ENCODE measurements at regions of chr12 and their contacts with region 1.

Region 1: DNA sequence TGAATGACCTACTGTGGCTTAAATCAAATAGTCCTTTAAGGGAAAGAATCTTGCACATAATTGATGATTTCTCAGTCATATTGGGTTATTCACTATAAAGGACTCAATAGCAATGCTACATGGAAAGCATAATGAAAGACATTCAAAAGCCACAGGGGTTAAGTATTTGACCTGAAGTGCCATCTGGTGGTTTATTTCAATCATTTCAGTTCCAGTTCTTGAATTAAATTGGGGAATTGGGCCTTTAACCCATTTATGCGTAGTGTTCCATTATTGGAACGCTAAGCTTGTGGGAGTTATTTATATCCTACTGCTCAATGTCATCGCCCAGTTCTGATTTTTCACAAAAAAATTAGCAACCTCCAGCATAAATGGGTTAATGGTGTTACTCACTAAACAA is 41.3 kb upstream of the C12orf71 start:
- DNase-seq: peak in 2 of 5 donors; percentile 10
- H3K4me3 ChIP-seq: no peak overlapping the region
- H3K4me3 Mint-ChIP-seq: no peak overlapping the region
- H3K27ac ChIP-seq: no peak overlapping the region
- H3K27ac Mint-ChIP-seq: no peak overlapping the region
- H3K4me1 ChIP-seq: no peaks in the 10 kb centered on the region
- H3K4me1 Mint-ChIP-seq: no peaks in the 10 kb centered on the region
- H3K27me3 ChIP-seq: no peaks in the 10 kb centered on the region
- H3K27me3 Mint-ChIP-seq: no peaks in the 10 kb centered on the region

Region 2: DNA sequence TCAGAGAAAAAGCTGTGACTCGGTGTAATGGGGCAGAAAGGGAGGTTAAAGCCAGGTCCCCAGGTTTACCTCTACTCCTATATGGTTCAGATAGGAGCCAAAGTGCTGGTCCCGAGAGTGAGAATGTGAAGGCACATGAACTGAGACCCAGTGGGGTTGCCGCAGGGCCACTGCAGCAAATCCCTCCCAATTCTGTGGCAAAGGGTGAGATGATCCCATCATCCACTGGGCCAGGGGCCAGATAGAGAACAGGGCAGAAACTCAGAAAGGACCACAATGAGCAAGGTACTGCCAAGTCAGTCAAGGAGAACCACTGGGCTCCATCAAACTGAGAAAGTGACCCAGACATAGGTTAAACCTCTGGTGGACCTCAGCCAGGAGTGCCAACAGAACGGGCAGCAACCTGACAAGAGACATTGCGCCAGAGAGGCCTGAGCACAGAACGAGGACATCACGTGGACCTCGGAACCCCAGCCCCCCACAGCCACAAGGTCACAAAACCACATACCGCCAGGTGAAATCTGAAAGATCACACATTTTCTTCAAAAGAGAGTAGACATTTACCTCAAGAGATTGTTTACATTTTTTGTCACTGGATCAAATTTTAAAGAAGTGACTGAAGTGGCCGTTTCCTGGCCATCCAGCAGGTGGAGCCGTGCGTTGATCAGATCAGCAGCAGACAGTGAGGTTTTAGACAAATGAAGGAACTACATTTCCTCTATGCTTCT is 270.2 kb before region 1 on chr12:
- CTCF ChIA-PET with region 1: no interaction called
- POLR2A ChIA-PET with region 1: no interaction called
- intact Hi-C with region 1: loop called (anchors 5 kb)
- DNase-seq: peak; percentile 59 to 69 (median 67)
- H3K4me3 ChIP-seq: no peak overlapping the region
- H3K4me3 Mint-ChIP-seq: no peak overlapping the region
- H3K27ac ChIP-seq: no peak overlapping the region
- H3K27ac Mint-ChIP-seq: peak overlapping the region in 2 of 7 donors; percentile 10 to 14
- H3K4me1 ChIP-seq: peaks cover 4% of the 10 kb centered on the region
- H3K4me1 Mint-ChIP-seq: no peaks in the 10 kb centered on the region
- H3K27me3 ChIP-seq: no peaks in the 10 kb centered on the region
- H3K27me3 Mint-ChIP-seq: peaks cover 3 to 6% of the 10 kb centered on the region in 2 donors

Region 3: GRCh38 chr12:27064397-27065342 is 59.0 kb before region 1 on chr12:
- CTCF ChIA-PET with region 1: no interaction called
- POLR2A ChIA-PET with region 1: no interaction called
- intact Hi-C with region 1: no loop called
- DNase-seq: no peak
- H3K4me3 ChIP-seq: no peak overlapping the region
- H3K4me3 Mint-ChIP-seq: no peak overlapping the region
- H3K27ac ChIP-seq: no peak overlapping the region
- H3K27ac Mint-ChIP-seq: no peak overlapping the region
- H3K4me1 ChIP-seq: no peaks in the 10 kb centered on the region
- H3K4me1 Mint-ChIP-seq: no peaks in the 10 kb centered on the region
- H3K27me3 ChIP-seq: no peaks in the 10 kb centered on the region
- H3K27me3 Mint-ChIP-seq: no peaks in the 10 kb centered on the region